ENCODE measurements at regions of chr10 and their contacts with region 1.

Region 1: DNA sequence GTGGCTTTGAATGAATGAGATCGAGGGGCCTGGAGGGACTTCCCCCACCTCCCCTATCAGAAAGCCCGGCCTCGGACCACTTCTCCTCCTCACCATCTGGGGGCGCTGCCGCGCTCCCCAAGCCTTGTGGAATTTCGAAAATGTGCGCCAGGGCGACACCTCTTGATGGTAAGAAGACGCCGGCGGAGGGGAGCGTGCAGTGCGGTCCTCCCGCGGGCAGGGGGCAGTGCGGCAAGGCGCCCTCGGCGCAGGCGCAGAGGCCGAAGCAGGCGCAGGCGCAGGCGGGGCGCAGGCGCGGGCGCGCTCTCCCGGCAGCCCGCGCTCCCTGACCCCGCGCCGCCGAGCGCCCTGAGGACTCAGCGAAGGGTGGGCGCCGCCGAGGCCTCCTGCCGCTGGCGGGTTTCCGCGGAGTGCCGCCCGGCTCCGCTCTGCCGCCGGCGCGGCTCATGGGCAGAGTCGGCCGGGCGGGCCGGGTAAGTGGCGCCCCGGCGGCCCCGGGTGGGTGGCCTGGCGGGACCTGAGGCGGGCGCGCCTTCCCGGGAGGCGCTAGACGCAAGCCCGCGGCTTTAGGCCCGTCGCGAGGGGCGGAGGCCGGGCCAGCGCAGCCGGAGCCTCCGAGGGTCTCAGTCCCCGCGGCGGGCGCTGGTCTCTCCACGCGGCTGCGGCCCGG is at the start of gene RBM17:
- DNase-seq: peak; percentile 75
- H3K4me3 ChIP-seq: peak within 1 kb of the TSS; percentile 92
- H3K27me3 ChIP-seq: 0 out of 2 replicates have a peak, but pooled peaks cover 3% of the 10 kb centered on the region
- CTCF ChIP-seq: peak; percentile 100
- polyA plus RNA-seq, gene RBM17: 28.9 and 31.7 TPM in 2 replicates

Region 2: DNA sequence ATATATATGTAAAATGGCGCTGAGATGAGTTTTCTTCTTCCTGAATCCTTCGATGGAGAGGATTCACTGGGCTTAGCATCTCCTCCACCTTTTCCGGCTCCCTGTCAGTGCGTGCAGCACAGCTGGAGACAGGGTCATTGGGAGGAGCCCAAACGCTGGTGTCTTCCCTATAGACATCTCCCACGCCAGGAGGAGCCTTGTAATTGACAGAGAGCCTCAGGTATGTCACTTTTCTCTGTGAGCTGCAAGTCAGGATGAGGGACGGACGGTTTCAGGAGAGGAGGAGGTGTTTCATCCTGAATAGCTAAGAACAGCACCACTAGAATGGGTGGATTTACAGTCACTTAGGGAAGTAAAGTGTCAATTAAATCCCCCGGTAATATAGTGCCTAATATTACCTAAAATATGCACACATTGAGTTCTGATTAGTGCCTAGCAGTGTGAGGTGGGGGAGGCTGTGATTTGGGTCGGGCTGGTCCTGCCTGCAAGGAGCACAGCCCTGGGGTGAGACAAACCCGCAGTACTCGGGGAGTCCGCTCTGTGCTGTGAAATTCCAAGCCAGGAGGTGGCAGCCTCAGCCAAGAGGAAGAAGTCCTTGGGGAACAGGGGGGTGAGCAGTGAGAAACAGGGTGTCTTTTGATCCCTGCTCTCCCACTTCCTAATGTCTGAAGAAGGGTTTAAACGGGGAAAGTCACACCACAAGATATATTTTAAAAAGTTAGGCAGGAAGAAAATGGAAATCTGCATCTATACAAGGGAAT is 139.7 kb before region 1 on chr10:
- CTCF ChIA-PET with region 1: interaction called, 16 read pairs
- POLR2A ChIA-PET with region 1: no interaction called
- DNase-seq: no peak
- H3K4me3 ChIP-seq: no peak overlapping the region
- H3K27me3 ChIP-seq: no peaks in the 10 kb centered on the region
- CTCF ChIP-seq: peak; percentile 63

Region 3: GRCh38 chr10:6014241-6014761 is 74.6 kb before region 1 on chr10:
- CTCF ChIA-PET with region 1: interaction called, 32 read pairs
- POLR2A ChIA-PET with region 1: no interaction called
- DNase-seq: no peak
- H3K4me3 ChIP-seq: no peak overlapping the region
- H3K27me3 ChIP-seq: no peaks in the 10 kb centered on the region; the same call in 1 of the 2 replicates
- CTCF ChIP-seq: peak; percentile 79

Region 4: GRCh38 chr10:6068422-6068821 is 20.4 kb before region 1 on chr10:
- CTCF ChIA-PET with region 1: interaction called, 23 read pairs
- POLR2A ChIA-PET with region 1: no interaction called
- DNase-seq: no peak
- H3K4me3 ChIP-seq: no peak overlapping the region
- H3K27me3 ChIP-seq: peaks cover 7% of the 10 kb centered on the region
- CTCF ChIP-seq: no peak

Region 5: DNA sequence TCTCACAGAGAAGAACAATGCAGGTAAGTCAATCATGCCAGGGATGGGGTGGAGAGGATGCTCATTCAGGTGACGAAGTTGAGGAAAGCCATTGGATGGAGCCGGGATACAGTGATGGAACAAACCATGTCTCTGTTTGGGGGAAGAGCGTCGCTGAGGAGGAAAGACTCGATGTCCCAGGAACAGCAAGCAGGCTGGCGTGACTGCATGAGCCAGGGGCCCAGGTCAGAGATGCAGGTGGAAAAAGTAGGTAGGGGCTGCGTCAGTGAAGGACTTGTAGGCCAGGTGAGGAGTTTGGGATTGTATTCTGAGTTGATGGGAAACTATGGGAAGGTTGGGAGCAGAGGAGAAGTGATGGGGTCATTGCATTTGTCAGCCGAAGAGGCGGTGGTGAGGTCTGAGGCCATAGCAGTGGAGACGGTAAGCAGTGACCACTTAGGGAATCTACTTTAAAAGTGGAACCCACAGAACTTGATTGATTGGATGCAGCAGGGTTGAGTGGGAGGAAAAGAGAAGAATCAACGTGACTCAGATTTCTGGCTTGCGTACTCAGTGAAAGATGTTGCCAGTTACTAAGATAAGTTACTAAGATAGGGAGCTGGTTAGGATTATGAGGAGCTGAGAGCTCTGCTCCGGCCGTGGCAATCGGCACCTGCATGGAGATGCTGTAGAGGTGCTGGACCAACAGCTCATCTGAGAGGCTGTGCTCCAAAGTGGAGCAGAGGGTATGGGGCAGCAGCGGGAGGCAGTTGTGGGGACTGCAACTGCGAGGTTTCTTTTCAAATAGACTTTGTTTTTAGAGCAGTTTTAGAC is 14.2 kb before region 1 on chr10:
- CTCF ChIA-PET with region 1: interaction called, 23 read pairs
- POLR2A ChIA-PET with region 1: no interaction called
- DNase-seq: no peak
- H3K4me3 ChIP-seq: no peak overlapping the region
- H3K27me3 ChIP-seq: peaks cover 3% of the 10 kb centered on the region
- CTCF ChIP-seq: no peak